Upper lobe of right lung (tissue), 1 donor: ENCODE measurements at regions of chr2 and their contacts with region 1.

Region 1: GRCh38 chr2:86079981-86080911 is 25.4 kb downstream of the POLR1A start:
- DNase-seq: peak; percentile 92
- ATAC-seq: peak; percentile 90
- H3K4me3 ChIP-seq: no peak overlapping the region
- H3K27ac ChIP-seq: peak overlapping the region; percentile 17
- H3K4me1 ChIP-seq: peaks cover 21% of the 10 kb centered on the region
- H3K27me3 ChIP-seq: no peaks in the 10 kb centered on the region
- CTCF ChIP-seq: peak; percentile 86

Region 2: DNA sequence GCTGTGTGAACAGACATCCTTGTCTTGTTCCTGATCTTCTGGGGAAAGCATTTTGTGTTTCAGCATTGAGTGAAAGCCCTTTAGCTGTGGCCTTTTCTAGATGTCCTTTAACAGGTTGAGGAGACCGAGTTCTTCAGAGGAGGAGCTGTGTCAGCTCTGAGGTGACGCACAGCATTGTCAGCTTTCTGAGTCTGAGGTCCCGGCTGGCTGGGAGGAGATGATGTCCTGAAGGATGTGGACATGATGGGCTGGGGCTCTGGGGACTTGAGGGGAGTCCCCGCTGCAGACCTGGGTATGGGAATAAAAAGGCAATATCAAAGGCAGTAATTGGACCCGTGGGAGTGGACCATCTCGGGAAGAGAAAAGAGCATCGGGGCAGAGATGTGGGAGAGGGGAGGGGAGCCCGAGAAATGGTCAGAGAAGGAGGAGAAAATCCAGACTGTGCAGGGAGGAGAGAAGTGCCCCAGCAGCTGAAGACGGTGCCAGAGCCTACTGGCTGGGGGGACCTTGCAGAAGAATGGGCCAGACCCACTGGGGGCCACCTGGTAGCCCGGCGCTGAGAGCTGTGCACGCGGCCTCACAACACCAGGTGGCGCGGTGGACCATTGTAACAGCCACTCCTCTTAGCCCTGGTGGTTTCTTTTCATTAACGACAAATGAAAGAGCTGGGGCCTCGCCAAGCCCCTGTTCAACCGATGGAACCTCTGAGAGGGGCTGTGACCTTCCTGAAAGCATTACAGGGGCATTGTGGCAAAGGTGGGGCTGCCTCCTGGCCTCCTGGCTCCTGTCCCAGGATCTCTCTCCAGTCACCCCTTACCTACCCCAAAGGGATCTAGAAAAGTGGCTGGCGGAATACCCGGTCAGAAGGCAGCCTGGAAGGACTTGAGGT is 253.0 kb before region 1 on chr2:
- intact Hi-C with region 1: loop called (anchors 5 kb)
- DNase-seq: peak; percentile 87
- ATAC-seq: peak; percentile 97
- H3K4me3 ChIP-seq: peak overlapping the region; percentile 28
- H3K27ac ChIP-seq: no peak overlapping the region
- H3K4me1 ChIP-seq: peaks cover 8% of the 10 kb centered on the region
- H3K27me3 ChIP-seq: no peaks in the 10 kb centered on the region
- CTCF ChIP-seq: peak; percentile 87

Region 3: DNA sequence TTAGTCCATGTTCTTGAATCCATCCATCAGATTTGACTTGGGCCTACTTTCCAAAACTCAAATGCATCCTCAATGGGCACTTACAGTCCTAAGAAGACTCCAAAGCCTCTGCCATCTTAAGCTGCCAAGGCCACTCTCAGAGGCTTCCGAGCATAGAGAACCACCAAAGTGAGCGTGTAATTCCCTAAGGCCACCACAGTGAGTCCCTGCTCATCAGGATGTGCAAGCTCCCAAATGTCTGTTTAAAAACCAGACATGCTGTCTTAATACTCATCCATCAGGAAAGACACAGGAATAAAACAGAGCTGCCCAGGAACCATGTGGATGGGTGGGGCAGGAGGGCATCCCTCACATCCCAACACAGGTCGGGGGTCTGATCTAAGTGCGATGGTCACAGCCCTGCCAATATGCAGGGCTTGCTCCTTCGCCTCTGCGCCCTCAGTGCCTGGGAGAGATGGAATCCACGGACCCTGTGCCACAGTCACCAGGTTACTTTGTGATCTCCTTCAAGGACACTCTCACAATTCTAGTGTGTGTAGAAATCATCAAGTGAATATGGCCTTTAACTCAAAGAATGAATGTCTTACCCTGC is 54.9 kb before region 1 on chr2:
- intact Hi-C with region 1: no loop called
- DNase-seq: no peak
- ATAC-seq: no peak
- H3K4me3 ChIP-seq: no peak overlapping the region
- H3K27ac ChIP-seq: no peak overlapping the region
- H3K4me1 ChIP-seq: peaks cover 4% of the 10 kb centered on the region
- H3K27me3 ChIP-seq: no peaks in the 10 kb centered on the region
- CTCF ChIP-seq: no peak